Right ventricle myocardium superior (tissue), 1 donor: ENCODE measurements at regions of chr14 and their contacts with region 1.

Region 1: DNA sequence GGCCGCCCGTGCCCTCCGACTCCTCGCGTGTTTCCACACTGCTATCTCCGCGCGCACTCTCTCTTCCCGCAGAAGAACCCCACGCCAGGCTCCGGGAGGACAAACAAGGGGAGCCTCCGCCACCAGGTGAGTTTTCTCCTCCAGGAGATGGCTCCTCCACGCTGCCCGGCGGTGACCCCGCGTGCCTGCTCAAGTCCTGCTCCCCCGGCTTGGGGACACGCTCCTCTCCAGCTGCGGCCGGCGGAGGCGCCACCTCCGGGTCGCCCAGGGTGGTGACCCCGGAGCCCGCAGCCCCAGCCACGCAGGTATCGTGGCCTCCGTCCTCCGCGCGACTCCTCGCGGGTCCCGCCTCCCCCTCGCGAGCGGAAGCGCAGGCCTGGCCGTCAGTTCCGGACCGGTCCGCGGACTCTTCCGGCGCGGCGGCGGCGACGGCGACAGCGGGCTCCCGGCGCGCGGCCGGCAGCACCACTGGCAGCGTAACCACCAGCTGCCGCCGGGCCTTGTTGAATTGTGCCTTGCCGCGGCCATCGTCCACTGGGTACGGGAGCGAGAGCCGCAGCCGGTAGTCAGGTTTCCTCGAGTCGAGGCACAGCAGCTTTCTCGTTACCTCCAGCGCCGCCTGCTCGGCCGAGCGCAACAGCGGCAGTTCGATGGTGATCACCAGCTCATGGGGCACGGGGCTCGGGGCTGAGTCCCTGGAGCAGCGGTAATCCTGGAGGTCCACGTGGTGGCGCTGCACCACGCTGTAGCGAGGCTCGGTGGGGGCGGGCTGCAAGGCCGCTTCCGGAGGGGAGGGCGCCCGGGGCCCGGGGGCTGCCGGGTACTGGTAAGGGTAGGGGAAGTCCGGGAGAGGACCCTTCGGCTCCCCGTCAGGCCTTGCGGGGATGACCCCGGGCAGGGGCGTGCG is 1.2 kb downstream of the DNAAF2 start:
- DNase-seq: peak; percentile 94
- ATAC-seq: peak; percentile 96

Region 2: DNA sequence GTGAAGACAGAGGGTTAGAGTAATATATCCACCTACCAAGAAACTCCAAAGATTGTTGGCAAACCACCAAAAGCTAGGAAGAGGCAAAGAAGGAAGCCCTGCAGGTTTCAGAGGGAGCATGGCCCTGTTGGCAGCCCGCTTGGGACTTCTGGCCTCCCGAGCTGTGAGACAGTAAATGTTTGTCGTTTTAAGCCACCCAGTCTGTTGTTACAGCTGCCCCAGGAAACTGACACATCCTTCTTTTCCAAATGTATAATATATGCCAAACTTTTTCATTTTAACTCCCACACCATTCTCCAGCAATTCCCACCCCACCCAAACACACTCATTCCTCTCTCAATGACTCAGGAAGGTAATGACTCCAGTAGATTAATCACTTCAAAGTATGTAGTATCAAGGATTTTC is 121.7 kb before region 1 on chr14:
- intact Hi-C with region 1: no loop called
- DNase-seq: no peak
- ATAC-seq: no peak

Region 3: GRCh38 chr14:49692811-49693734 is 59.2 kb after region 1 on chr14 and contains the start of gene KLHDC1:
- intact Hi-C with region 1: loop called (anchors 5 kb)
- DNase-seq: peak; percentile 94
- ATAC-seq: peak; percentile 95
- total RNA-seq, gene KLHDC1: 5.9 TPM

Region 4: GRCh38 chr14:49767562-49768300 is 133.8 kb after region 1 on chr14 and contains the start of gene KLHDC2:
- intact Hi-C with region 1: loop called (anchors 1 kb)
- DNase-seq: peak; percentile 94
- ATAC-seq: peak; percentile 97
- total RNA-seq, gene KLHDC2: 89.3 TPM